GM10248 (cell line): ENCODE measurements at regions of chr5 and their contacts with region 1.

Region 1: GRCh38 chr5:159987031-159987674 is 21.8 kb upstream of the TTC1 start:
- DNase-seq: peak; percentile 88
- CTCF ChIP-seq: peak; percentile 85

Region 2: DNA sequence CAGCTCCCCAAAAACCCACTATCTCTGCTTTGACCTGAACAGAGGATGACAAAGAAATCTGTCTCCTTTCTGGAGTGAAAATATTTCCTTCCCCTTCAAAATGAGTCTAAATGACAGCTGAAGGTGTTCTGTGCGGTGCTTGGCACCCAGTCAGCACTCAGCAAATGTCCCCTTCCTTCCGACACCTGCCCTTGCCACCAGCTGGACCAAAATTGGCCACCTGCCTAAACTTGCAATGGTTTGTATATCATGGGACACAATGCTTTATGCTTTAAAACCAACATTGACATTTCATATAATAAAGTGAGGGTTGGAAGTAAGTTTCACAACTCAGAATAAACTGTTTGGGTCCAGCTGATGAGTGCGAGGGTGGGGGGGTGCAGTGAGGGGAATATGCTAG is 14.3 kb after region 1 on chr5:
- CTCF ChIA-PET with region 1: interaction called, 10 read pairs
- POLR2A ChIA-PET with region 1: no interaction called
- DNase-seq: no peak
- CTCF ChIP-seq: no peak

Region 3: GRCh38 chr5:160887777-160888176 is 900.6 kb after region 1 on chr5:
- CTCF ChIA-PET with region 1: no interaction called
- POLR2A ChIA-PET with region 1: no interaction called
- DNase-seq: no peak
- CTCF ChIP-seq: no peak